ENCODE measurements at regions of chr16 and their contacts with region 1.

Region 1: GRCh38 chr16:6643080-6643686 is 689.5 kb upstream of the RBFOX1 start:
- DNase-seq: no peak
- ATAC-seq: no peak
- H3K4me3 ChIP-seq: no peak overlapping the region
- H3K27ac ChIP-seq: no peak overlapping the region
- H3K4me1 ChIP-seq: no peaks in the 10 kb centered on the region
- H3K27me3 ChIP-seq: no peaks in the 10 kb centered on the region
- CTCF ChIP-seq: peak; percentile 71

Region 2: GRCh38 chr16:5234295-5235050 is 1408.7 kb before region 1 on chr16:
- intact Hi-C with region 1: loop called in 1 of 2 experiments (anchors 5 kb)
- DNase-seq: no peak
- ATAC-seq: no peak
- H3K4me3 ChIP-seq: no peak overlapping the region
- H3K27ac ChIP-seq: no peak overlapping the region
- H3K4me1 ChIP-seq: no peaks in the 10 kb centered on the region
- H3K27me3 ChIP-seq: peaks cover 0 to 2% (median 0%) of the 10 kb centered on the region in 3 donors
- CTCF ChIP-seq: no peak

Region 3: DNA sequence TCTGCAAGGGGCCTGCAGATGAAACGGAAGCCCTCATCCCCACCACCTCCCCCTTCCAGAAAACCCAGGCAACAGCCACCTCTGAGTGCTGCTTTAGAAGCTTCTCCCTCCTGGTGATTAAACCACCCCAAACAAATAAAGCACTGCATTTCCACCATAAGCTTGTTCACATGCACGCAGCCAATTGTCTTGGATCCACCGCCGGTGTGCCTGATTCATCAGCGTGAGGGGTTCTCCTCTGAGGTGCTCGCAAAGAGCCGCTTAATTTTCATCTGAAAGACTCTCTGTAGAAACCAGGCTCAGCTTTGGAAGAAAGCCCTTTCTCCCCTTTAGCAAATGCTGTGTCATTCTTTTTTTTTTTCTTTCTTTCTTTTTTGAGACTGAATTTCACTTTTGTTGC is 1390.4 kb before region 1 on chr16:
- intact Hi-C with region 1: loop called in 1 of 2 experiments (anchors 10 kb)
- DNase-seq: no peak
- ATAC-seq: no peak
- H3K4me3 ChIP-seq: no peak overlapping the region
- H3K27ac ChIP-seq: no peak overlapping the region
- H3K4me1 ChIP-seq: no peaks in the 10 kb centered on the region
- H3K27me3 ChIP-seq: no peaks in the 10 kb centered on the region
- CTCF ChIP-seq: no peak

Region 4: GRCh38 chr16:6105115-6105514 is 538.1 kb before region 1 on chr16:
- intact Hi-C with region 1: no loop called
- DNase-seq: no peak
- ATAC-seq: no peak
- H3K4me3 ChIP-seq: no peak overlapping the region
- H3K27ac ChIP-seq: no peak overlapping the region
- H3K4me1 ChIP-seq: no peaks in the 10 kb centered on the region
- H3K27me3 ChIP-seq: no peaks in the 10 kb centered on the region
- CTCF ChIP-seq: no peak